ENCODE measurements at regions of chr11 and their contacts with region 1.

Region 1: DNA sequence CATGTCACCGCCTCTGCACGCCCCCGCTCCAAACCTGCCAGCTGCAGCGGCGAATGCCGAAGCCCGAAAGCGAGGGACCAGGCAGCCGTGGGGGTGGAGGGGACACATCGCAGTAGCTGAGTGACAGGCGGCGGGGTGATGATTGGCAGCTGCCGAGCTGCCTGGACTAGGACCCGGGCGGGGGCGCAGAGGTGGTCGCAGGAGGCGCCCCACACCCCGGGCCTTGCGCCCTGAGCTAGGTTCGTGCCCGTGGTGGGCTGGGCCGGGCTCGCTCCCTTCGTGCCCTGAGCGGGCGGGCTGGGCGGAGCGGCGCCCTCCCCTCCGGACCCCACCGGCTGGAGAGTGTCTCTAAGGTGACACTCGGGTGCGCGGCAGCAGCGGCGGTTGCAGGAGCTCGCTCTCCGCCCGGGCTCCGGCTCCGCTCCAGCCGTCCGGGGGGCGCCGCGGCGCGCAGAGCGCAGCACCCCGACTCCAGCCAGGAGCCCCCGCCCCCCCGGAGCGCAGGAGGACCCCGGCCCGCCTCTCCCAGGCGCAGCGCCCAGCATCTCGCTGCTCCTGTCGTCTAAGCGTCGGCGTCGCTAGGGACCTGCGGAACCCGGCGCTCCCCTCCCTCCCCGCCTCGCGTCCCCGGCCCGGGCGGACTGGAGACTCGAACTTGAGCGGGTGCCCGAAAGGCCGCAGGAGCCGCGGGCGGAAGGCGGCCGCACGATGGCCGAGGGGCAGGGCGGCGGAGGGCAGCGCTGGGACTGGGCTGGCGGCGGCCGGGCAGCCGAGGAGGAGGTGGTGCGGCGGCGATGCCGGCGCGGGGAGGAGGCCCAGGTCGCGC is 14.5 kb upstream of the DGKZ start:
- DNase-seq: peak; percentile 47
- H3K4me3 Mint-ChIP-seq: peak overlapping the region; percentile 75
- H3K27ac Mint-ChIP-seq: no peak overlapping the region
- H3K4me1 Mint-ChIP-seq: peaks cover 74% of the 10 kb centered on the region
- H3K27me3 Mint-ChIP-seq: peaks cover 86% of the 10 kb centered on the region

Region 2: GRCh38 chr11:46315033-46315738 is 17.6 kb before region 1 on chr11:
- CTCF ChIA-PET with region 1: interaction called, 16 read pairs
- DNase-seq: peak; percentile 82
- H3K4me3 Mint-ChIP-seq: no peak overlapping the region
- H3K27ac Mint-ChIP-seq: no peak overlapping the region
- H3K4me1 Mint-ChIP-seq: peaks cover 29% of the 10 kb centered on the region
- H3K27me3 Mint-ChIP-seq: peaks cover 24% of the 10 kb centered on the region